GM12878 (cell line): ENCODE measurements at regions of chr3 and their contacts with region 1.

Region 1: GRCh38 chr3:197029511-197030167 is at the start of gene MELTF:
- DNase-seq: no peak
- ATAC-seq: peak; percentile 88
- H3K4me3 ChIP-seq: peak within 1 kb of the TSS; percentile 93
- H3K27ac ChIP-seq: peak within 1 kb of the TSS; percentile 83
- H3K4me1 ChIP-seq: no peaks in the 10 kb centered on the region; the same call in 1 of the 2 replicates
- H3K27me3 ChIP-seq: no peaks in the 10 kb centered on the region
- CTCF ChIP-seq: peak; percentile 65 to 90 (median 82)
- EP300 ChIP-seq: no peak
- POLR2A ChIP-seq: peak; percentile 86
- RAD21 ChIP-seq: peak; percentile 63
- polyA plus RNA-seq, gene MELTF: 0.55 to 1.3 TPM

Region 2: GRCh38 chr3:196979545-196979944 is 50.1 kb before region 1 on chr3:
- CTCF ChIA-PET with region 1: interaction called, 8 read pairs
- POLR2A ChIA-PET with region 1: no interaction called
- RAD21 ChIA-PET with region 1: interaction called, 4 read pairs
- SMC1A ChIA-PET with region 1: no interaction called
- in situ Hi-C with region 1: no loop called
- intact Hi-C with region 1: loop called (anchors 2 kb)
- DNase-seq: no peak
- ATAC-seq: no peak
- H3K4me3 ChIP-seq: no peak overlapping the region
- H3K27ac ChIP-seq: no peak overlapping the region
- H3K4me1 ChIP-seq: peaks cover 6% of the 10 kb centered on the region
- H3K27me3 ChIP-seq: no peaks in the 10 kb centered on the region
- CTCF ChIP-seq: no peak
- EP300 ChIP-seq: no peak
- POLR2A ChIP-seq: no peak
- RAD21 ChIP-seq: no peak

Region 3: DNA sequence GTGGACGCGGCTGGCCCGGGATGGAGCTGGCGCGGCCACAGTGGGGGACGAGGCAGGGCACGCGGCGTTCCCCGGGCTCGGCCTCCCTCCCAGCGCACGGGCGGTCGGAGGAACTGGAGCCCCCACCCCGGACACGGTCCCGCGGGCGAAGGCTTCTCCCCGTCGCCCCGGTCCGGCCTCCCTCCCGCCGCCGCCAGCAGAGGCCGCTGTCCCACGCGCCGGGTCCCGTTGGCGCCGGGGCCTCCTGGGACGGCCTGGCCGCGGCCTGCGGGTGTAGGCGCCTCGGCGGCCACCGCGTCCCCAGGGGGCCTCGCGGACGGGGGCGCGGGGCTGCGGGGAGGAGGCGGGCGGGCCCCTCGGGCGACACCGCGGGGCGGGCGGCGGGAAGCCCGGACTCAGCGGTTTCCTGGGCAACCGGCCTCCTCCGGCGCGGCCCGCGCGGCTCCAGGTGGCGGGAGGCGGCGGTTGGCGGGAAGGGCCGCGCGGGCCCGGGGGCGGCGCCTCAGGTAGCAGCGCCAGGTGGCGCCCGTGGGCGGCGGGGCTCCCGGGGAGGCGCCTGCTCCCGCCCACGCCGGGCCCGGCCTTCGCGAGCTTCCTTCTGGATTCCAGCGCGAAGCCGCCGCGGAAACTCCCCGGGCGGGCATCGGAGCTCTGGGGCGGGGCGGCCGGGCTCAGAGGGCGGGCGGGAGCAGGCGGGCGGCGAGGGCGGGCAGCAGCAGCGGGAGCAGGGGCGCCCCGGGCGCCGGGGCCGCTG is 26.8 kb before region 1 on chr3:
- CTCF ChIA-PET with region 1: interaction called, 45 read pairs
- POLR2A ChIA-PET with region 1: interaction called, 11 read pairs
- RAD21 ChIA-PET with region 1: interaction called, 48 read pairs
- SMC1A ChIA-PET with region 1: interaction called, 33 read pairs
- in situ Hi-C with region 1: no loop called
- intact Hi-C with region 1: loop called (anchors 1 kb)
- DNase-seq: no peak
- ATAC-seq: peak; percentile 78
- H3K4me3 ChIP-seq: peak overlapping the region; percentile 71
- H3K27ac ChIP-seq: peak overlapping the region; percentile 70
- H3K4me1 ChIP-seq: peaks cover 9% of the 10 kb centered on the region
- H3K27me3 ChIP-seq: no peaks in the 10 kb centered on the region
- CTCF ChIP-seq: peak; percentile 48 to 76 (median 66); a peak in 5 of 6 replicates
- EP300 ChIP-seq: no peak
- POLR2A ChIP-seq: peak; percentile 49
- RAD21 ChIP-seq: peak; percentile 74

Region 4: DNA sequence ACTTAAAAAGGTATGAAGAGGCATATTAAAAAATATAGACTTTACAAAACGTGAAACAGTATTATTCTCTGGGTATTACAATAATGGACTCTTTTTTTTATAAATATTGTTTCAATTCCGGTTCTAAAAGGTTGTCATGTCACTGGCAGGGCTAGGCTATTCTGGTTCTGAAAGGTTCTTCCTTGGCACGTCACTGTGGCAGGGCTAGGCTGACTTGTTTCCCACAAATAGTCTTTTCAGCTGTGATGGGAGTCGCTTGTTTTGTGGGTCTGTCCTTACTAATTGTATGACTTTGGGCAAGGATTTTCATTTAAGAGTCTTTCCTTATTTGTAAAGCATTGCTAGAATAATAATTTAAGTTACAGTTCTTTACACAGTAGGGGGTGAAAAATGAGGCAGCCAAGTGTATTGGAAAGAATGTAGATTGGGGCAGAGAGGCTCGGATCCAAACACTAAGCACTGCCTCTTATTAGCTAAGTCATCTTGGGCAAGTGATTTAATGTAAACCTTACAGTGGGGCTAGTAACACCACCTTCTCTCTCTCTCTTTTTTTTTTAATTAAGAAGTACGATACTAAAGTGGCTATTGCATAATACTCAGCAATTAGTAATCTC is 12.3 kb after region 1 on chr3:
- CTCF ChIA-PET with region 1: interaction called, 54 read pairs
- POLR2A ChIA-PET with region 1: interaction called, 5 read pairs
- RAD21 ChIA-PET with region 1: interaction called, 3 read pairs
- SMC1A ChIA-PET with region 1: interaction called, 13 read pairs
- in situ Hi-C with region 1: no loop called
- intact Hi-C with region 1: no loop called
- DNase-seq: no peak
- ATAC-seq: no peak
- H3K4me3 ChIP-seq: no peak overlapping the region
- H3K27ac ChIP-seq: no peak overlapping the region
- H3K4me1 ChIP-seq: no peaks in the 10 kb centered on the region
- H3K27me3 ChIP-seq: no peaks in the 10 kb centered on the region
- CTCF ChIP-seq: no peak
- EP300 ChIP-seq: no peak
- POLR2A ChIP-seq: no peak
- RAD21 ChIP-seq: no peak

Region 5: GRCh38 chr3:197050511-197050910 is 20.9 kb after region 1 on chr3:
- CTCF ChIA-PET with region 1: interaction called, 54 read pairs
- POLR2A ChIA-PET with region 1: interaction called, 5 read pairs
- RAD21 ChIA-PET with region 1: interaction called, 8 read pairs
- SMC1A ChIA-PET with region 1: interaction called, 13 read pairs
- in situ Hi-C with region 1: no loop called
- intact Hi-C with region 1: no loop called
- DNase-seq: peak; percentile 59
- ATAC-seq: peak; percentile 88
- H3K4me3 ChIP-seq: peak overlapping the region; percentile 23; the same call in 1 of the 2 replicates
- H3K27ac ChIP-seq: peak overlapping the region; percentile 81
- H3K4me1 ChIP-seq: peaks cover 17% of the 10 kb centered on the region; the same call in 1 of the 2 replicates
- H3K27me3 ChIP-seq: no peaks in the 10 kb centered on the region
- CTCF ChIP-seq: no peak
- EP300 ChIP-seq: peak in 1 of 2 experiments; percentile 15; a peak in 1 of 4 replicates
- POLR2A ChIP-seq: no peak
- RAD21 ChIP-seq: no peak

Region 6: DNA sequence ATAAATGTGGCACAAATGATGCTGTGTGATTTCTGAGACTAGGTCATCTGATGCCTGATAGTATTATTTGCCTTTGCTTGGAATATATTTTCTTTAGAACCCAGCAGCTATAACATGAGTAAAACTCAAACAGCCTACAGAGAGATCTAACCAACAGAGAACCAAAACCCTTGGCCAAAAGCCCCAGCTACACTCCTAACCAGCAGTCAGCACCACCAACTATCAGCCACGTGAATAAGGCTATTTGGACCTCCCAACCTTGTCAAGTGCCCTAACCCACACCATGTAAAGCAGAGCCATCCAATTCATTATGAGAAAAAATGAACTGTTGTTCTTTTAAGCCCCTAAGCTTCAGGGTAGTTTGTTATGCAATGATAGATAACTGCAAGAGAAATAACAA is 114.5 kb after region 1 on chr3:
- CTCF ChIA-PET with region 1: no interaction called
- POLR2A ChIA-PET with region 1: no interaction called
- RAD21 ChIA-PET with region 1: no interaction called
- SMC1A ChIA-PET with region 1: no interaction called
- in situ Hi-C with region 1: no loop called
- intact Hi-C with region 1: no loop called
- DNase-seq: peak; percentile 5
- ATAC-seq: peak; percentile 57
- H3K4me3 ChIP-seq: no peak overlapping the region
- H3K27ac ChIP-seq: no peak overlapping the region
- H3K4me1 ChIP-seq: no peaks in the 10 kb centered on the region
- H3K27me3 ChIP-seq: no peaks in the 10 kb centered on the region
- CTCF ChIP-seq: no peak
- EP300 ChIP-seq: no peak
- POLR2A ChIP-seq: no peak
- RAD21 ChIP-seq: no peak

Region 7: GRCh38 chr3:197181741-197182140 is 152.1 kb after region 1 on chr3:
- CTCF ChIA-PET with region 1: interaction called, 36 read pairs
- POLR2A ChIA-PET with region 1: no interaction called
- RAD21 ChIA-PET with region 1: interaction called, 6 read pairs
- SMC1A ChIA-PET with region 1: interaction called, 6 read pairs
- in situ Hi-C with region 1: no loop called
- intact Hi-C with region 1: no loop called
- DNase-seq: no peak
- ATAC-seq: no peak
- H3K4me3 ChIP-seq: no peak overlapping the region
- H3K27ac ChIP-seq: no peak overlapping the region
- H3K4me1 ChIP-seq: peaks cover 3% of the 10 kb centered on the region; the same call in 1 of the 2 replicates
- H3K27me3 ChIP-seq: no peaks in the 10 kb centered on the region
- CTCF ChIP-seq: no peak
- EP300 ChIP-seq: no peak
- POLR2A ChIP-seq: no peak
- RAD21 ChIP-seq: no peak

Region 8: DNA sequence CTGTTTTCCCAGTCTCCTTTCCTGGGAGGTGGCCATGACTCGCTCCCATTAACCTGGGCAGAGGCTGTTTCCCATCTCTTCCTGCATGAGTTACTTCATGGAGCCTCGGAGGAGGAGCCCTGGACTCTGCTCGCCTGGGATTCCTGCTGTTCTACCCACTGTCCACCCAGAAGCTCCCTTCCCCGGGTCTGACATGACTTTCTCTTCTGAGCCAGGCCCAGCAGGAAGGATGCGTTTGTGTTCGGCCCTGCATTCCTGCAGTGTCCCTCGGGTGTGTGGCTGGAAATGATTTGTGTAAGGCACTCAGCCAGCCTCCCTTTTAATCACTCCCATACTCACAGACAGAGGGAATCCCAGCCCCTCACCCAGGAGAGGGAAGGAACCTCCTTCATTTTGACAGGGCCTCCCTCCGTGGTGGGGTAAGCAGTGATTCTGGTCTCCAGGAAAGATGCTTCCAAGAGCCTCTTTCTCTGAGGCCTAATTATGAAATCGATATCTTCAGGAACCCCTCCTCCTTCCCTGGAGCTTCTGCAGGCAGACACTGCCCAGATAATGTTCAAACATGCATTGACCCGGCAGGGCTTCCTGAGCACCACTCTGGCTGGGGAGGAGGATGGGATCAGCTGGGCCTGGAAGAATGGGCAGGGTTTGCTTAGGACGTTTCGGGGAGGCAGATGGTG is 310.3 kb after region 1 on chr3:
- CTCF ChIA-PET with region 1: no interaction called
- POLR2A ChIA-PET with region 1: no interaction called
- RAD21 ChIA-PET with region 1: no interaction called
- SMC1A ChIA-PET with region 1: no interaction called
- in situ Hi-C with region 1: no loop called
- intact Hi-C with region 1: no loop called
- DNase-seq: no peak
- ATAC-seq: no peak
- H3K4me3 ChIP-seq: no peak overlapping the region
- H3K27ac ChIP-seq: no peak overlapping the region
- H3K4me1 ChIP-seq: peaks cover 6% of the 10 kb centered on the region
- H3K27me3 ChIP-seq: no peaks in the 10 kb centered on the region
- CTCF ChIP-seq: no peak
- EP300 ChIP-seq: no peak
- POLR2A ChIP-seq: no peak
- RAD21 ChIP-seq: no peak